ENCODE measurements at regions of chr1 and their contacts with region 1.

Region 1: DNA sequence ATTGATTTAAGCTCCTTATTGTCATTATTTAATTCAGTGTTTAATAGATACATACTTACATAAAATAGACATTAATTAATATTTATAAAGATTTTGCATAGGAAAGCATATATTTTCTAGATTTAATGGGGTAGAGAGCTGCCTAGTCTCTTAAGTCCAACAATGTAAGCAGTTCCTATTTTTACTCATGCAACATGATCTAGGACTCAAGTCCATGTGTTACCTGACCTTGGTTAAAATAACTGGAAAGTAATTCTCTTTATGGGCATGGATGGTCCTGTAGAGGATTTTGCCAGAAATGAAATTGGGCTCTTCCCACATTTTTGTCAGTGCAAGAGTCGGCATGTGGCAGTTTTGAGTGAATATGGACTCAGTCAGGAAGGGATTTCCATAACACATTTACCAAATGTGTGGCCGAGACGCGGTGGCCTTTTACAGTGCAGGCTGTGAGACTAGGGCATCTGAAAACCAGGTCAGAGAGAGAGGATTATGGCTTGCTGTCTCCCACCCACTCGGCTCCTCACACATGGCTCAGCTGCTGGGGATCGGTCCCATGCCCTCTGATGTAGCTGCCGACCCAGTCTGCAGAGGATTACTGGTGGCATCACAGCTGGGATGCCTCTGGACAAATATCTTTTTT is 6.2 kb upstream of the KIF1B start:
- DNase-seq: no peak
- ATAC-seq: no peak
- H3K4me3 ChIP-seq: no peak overlapping the region
- H3K4me3 Mint-ChIP-seq: no peak overlapping the region
- H3K27ac ChIP-seq: no peak overlapping the region
- H3K27ac Mint-ChIP-seq: no peak overlapping the region
- H3K4me1 ChIP-seq: no peaks in the 10 kb centered on the region
- H3K4me1 Mint-ChIP-seq: peaks cover 0 to 3% (median under 1%) of the 10 kb centered on the region in 3 donors
- H3K27me3 ChIP-seq: peaks cover 0 to 24% of the 10 kb centered on the region in 2 experiments
- H3K27me3 Mint-ChIP-seq: peaks cover 3% of the 10 kb centered on the region in 2 donors

Region 2: GRCh38 chr1:9916452-9916851 is 287.7 kb before region 1 on chr1:
- CTCF ChIA-PET with region 1: no interaction called
- POLR2A ChIA-PET with region 1: interaction called in 1 of 2 experiments, 10 read pairs
- DNase-seq: no peak
- ATAC-seq: no peak
- H3K4me3 ChIP-seq: no peak overlapping the region
- H3K4me3 Mint-ChIP-seq: no peak overlapping the region
- H3K27ac ChIP-seq: no peak overlapping the region
- H3K27ac Mint-ChIP-seq: no peak overlapping the region
- H3K4me1 ChIP-seq: peaks cover 0 to 3% of the 10 kb centered on the region in 2 experiments
- H3K4me1 Mint-ChIP-seq: peaks cover 7 to 11% (median 9%) of the 10 kb centered on the region in 3 donors
- H3K27me3 ChIP-seq: no peaks in the 10 kb centered on the region
- H3K27me3 Mint-ChIP-seq: no peaks in the 10 kb centered on the region

Region 3: GRCh38 chr1:10007169-10007568 is 197.0 kb before region 1 on chr1:
- CTCF ChIA-PET with region 1: no interaction called
- POLR2A ChIA-PET with region 1: no interaction called
- DNase-seq: no peak
- ATAC-seq: no peak
- H3K4me3 ChIP-seq: no peak overlapping the region
- H3K4me3 Mint-ChIP-seq: no peak overlapping the region
- H3K27ac ChIP-seq: no peak overlapping the region
- H3K27ac Mint-ChIP-seq: no peak overlapping the region
- H3K4me1 ChIP-seq: no peaks in the 10 kb centered on the region
- H3K4me1 Mint-ChIP-seq: no peaks in the 10 kb centered on the region
- H3K27me3 ChIP-seq: peaks cover 0 to 25% of the 10 kb centered on the region in 2 experiments
- H3K27me3 Mint-ChIP-seq: peaks cover 6 to 13% of the 10 kb centered on the region in 2 donors

Measured in T-cell (primary cell).